GM23248 (cell line): ENCODE measurements at regions of chr7 and their contacts with region 1.

Region 1: GRCh38 chr7:151351027-151351426 is 9.4 kb downstream of the NUB1 start:
- DNase-seq: no peak
- H3K4me3 ChIP-seq: no peak overlapping the region
- H3K27ac ChIP-seq: no peak overlapping the region
- H3K4me1 ChIP-seq: peaks cover 3% of the 10 kb centered on the region
- H3K27me3 ChIP-seq: no peaks in the 10 kb centered on the region

Region 2: DNA sequence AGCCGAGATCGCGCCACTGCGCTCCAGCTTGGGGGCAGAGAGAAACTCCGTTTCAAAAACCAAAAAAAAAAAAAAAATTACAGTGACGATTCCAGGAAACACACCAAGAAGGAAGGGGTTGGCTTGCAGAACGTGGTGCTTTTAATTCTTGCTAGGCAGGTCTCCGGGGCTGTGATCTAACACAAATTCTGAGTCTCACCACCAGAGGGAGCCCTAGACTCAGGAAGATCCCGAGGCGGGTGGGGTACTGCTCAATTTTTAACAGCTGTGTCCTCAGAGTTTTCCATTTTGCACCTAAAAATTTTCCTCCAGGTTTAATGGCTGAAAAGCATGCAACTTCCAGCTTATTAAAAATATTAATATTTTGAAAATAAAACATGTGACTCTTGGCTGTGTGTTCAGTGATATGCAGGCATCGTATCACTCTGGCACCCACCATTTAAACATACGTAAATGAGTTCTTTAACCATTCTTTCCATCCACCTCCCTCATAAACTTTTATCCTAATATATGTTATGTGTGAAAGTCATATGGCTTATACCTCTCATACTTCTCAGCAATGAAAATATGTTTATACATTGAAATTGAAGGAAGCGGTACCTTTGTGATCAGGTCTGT is 35.9 kb before region 1 on chr7:
- in situ Hi-C with region 1: loop called (anchors 5 kb)
- DNase-seq: peak; percentile 78
- H3K4me3 ChIP-seq: no peak overlapping the region
- H3K27ac ChIP-seq: no peak overlapping the region
- H3K4me1 ChIP-seq: peaks cover 11% of the 10 kb centered on the region
- H3K27me3 ChIP-seq: no peaks in the 10 kb centered on the region; the same call in 1 of the 2 replicates